Right ventricle myocardium superior (tissue), 1 donor: ENCODE measurements at regions of chr18 and their contacts with region 1.

Region 1: GRCh38 chr18:5879479-5879882 is 15.8 kb downstream of the TMEM200C start:
- DNase-seq: no peak
- ATAC-seq: peak; percentile 41

Region 2: GRCh38 chr18:4921548-4921947 is 957.9 kb before region 1 on chr18:
- intact Hi-C with region 1: no loop called
- DNase-seq: no peak
- ATAC-seq: no peak

Region 3: GRCh38 chr18:6024745-6025340 is 145.4 kb after region 1 on chr18:
- intact Hi-C with region 1: no loop called
- DNase-seq: no peak
- ATAC-seq: no peak

Region 4: DNA sequence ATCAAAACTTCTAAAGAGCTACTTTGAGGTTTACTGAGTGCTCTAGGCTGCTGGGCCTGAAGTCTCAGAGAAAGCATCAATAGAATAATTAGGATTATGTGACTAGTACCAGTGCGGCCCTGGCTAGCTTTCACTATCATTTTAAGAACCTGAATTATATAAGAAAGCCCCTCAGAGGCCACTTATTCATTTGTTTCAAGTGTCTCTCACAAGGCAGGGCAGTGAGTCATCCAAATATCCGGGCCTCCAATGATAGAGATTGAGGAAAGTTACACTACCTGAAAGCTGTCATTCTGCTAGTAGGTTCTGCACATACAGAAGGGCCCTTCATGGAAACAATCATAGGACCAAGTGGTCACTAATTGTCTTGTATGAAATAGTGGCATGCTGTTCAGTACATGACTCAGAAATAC is 342.1 kb after region 1 on chr18:
- intact Hi-C with region 1: loop called (anchors 10 kb)
- DNase-seq: no peak
- ATAC-seq: no peak

Region 5: GRCh38 chr18:6476190-6476589 is 596.7 kb after region 1 on chr18:
- intact Hi-C with region 1: loop called (anchors 5 kb)
- DNase-seq: no peak
- ATAC-seq: no peak